CD8-positive, alpha-beta memory T cell (primary cell): ENCODE measurements at regions of chr9 and their contacts with region 1.

Region 1: GRCh38 chr9:136728080-136728547 is 14.6 kb downstream of the LCN10 start:
- DNase-seq: peak; percentile 85 to 94 (median 90)
- H3K4me3 ChIP-seq: peak overlapping the region; percentile 98
- H3K4me3 Mint-ChIP-seq: peak overlapping the region; percentile 76 to 98 (median 96)
- H3K27ac ChIP-seq: peak overlapping the region; percentile 84
- H3K27ac Mint-ChIP-seq: peak overlapping the region in 3 of 8 donors; percentile 39 to 97 (median 51)
- H3K4me1 ChIP-seq: peaks cover 28% of the 10 kb centered on the region
- H3K4me1 Mint-ChIP-seq: peaks cover 23 to 36% (median 24%) of the 10 kb centered on the region in 3 donors
- H3K27me3 ChIP-seq: no peaks in the 10 kb centered on the region
- H3K27me3 Mint-ChIP-seq: peaks cover 0 to 7% of the 10 kb centered on the region in 2 donors

Region 2: DNA sequence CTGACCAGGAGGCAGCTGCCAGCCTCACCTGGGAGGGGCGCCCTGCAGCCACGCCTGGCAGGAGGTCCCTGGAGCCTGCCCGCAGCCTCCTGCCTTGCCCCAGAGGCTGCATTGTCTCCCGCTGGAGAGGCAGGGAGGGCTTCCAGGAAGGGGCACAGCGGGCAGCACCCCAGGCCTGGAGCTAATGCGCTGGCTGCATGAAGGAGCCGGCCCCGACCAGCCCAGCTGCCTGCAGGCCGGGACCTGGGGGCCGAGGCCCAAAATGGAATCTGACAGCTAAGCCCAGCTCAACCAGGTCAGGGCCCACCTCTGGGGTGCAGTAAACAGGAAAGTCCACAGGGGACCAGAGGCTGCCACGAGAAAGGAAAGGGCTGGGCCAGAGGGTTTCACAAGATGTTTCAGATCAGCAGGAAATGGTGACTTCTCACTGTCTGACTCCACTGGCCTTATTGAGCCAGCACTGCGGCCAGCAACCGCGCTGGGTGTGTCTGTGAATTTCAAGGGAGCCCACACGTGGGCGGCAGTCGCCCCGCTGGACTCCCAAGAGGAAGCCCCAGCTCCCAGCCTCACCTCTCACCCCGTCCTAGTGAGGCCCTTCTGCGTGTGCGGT is 163.6 kb before region 1 on chr9:
- CTCF ChIA-PET with region 1: no interaction called
- POLR2A ChIA-PET with region 1: no interaction called
- DNase-seq: no peak
- H3K4me3 ChIP-seq: no peak overlapping the region
- H3K4me3 Mint-ChIP-seq: no peak overlapping the region
- H3K27ac ChIP-seq: no peak overlapping the region
- H3K27ac Mint-ChIP-seq: no peak overlapping the region
- H3K4me1 ChIP-seq: no peaks in the 10 kb centered on the region
- H3K4me1 Mint-ChIP-seq: peaks cover 0 to 1% (median 0%) of the 10 kb centered on the region in 3 donors
- H3K27me3 ChIP-seq: no peaks in the 10 kb centered on the region
- H3K27me3 Mint-ChIP-seq: no peaks in the 10 kb centered on the region

Region 3: DNA sequence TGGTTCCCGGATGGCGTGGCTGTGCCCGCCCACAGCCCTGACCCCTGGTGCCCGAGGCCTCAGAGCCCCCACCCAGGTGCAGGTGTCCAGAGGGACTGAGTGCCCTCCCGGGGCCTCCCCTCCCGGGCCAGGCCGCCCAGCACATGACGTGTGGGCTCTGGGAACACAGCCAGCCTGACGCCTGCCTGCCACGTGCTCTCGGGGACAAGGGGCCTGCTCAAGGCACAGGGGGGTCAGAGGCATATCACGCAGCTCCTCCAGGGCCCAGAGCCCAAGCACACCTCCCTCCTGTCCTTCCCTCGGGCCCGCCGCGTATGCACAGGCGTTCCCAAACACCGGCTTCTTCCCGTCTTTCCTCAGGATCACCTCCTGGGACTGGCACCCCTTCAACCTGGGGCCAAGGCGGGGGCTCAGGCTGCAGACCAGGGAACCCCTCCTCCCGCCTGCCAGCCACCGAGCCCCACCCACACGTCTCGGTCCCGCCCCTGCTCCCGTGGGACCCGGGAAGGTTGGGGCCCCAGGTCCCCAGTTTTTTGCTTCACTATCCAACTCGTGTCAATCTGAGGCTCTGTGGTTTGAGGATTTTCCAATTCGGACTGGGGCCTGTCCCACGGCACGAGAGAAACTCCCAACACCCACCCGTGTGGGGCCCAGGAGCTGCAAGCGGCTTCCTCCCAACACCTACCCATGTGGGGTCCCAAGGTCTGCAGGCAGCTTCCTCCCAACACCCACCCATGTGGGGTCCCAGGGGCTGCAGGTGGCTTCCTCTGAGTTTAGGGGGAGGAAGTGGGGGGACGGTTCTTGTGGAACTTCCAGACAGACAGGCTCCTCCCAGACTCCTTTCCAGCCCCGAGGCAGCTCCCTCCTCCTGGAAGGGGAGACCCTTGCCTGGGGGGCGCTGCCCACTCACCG is 13.1 kb after region 1 on chr9:
- CTCF ChIA-PET with region 1: interaction called, 11 read pairs
- POLR2A ChIA-PET with region 1: interaction called, 6 read pairs
- DNase-seq: no peak
- H3K4me3 ChIP-seq: peak overlapping the region; percentile 37
- H3K4me3 Mint-ChIP-seq: peak overlapping the region in 6 of 7 donors; percentile 45 to 77 (median 60)
- H3K27ac ChIP-seq: no peak overlapping the region
- H3K27ac Mint-ChIP-seq: no peak overlapping the region
- H3K4me1 ChIP-seq: peaks cover 8% of the 10 kb centered on the region
- H3K4me1 Mint-ChIP-seq: peaks cover 0 to 8% (median 0%) of the 10 kb centered on the region in 3 donors
- H3K27me3 ChIP-seq: no peaks in the 10 kb centered on the region
- H3K27me3 Mint-ChIP-seq: peaks cover 7 to 10% of the 10 kb centered on the region in 2 donors

Region 4: DNA sequence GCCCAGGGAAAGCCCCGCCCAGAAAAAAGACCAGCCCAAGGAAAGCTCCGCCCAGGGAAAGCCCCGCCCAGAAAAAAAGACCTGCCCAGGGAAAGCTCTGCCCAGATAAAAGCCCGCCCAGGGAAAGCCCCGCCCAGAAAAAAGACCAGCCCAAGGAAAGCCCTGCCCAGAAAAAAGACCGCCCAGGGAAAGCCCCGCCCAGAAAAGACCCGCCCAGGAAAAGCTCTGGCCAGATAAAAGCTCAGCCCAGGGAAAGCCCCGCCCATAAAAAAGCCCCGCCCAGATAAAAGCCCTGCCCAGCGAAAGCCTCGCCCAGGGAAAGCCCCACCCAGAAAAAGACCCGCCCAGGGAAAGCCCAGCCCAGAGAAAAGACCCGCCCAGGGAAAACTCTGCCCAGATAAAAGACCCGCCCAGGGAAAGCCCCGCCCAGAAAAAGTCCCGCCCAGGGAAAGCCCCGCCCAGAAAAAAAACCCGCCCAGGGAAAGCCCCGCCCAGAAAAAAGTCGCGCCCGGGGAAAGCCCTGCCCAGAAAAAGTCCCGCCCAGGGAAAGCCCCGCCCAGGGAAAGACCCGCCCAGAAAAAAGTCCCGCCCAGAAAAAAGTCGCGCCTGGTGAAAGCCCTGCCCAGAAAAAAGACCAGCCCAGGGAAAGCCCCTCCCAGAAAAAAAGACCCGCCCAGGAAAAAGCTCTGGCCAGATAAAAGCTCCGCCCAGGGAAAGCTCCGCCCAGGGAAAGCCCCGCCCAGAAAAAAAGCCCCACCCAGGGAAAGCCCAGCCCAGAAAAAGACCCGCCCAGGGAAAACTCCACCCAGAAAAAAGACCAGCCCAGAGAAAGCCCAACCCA is 422.7 kb after region 1 on chr9:
- CTCF ChIA-PET with region 1: no interaction called
- POLR2A ChIA-PET with region 1: no interaction called
- DNase-seq: peak in 1 of 5 donors; percentile 17
- H3K4me3 ChIP-seq: no peak overlapping the region
- H3K4me3 Mint-ChIP-seq: peak overlapping the region in 1 of 7 donors; percentile 56
- H3K27ac ChIP-seq: no peak overlapping the region
- H3K27ac Mint-ChIP-seq: peak overlapping the region in 1 of 8 donors; percentile 65
- H3K4me1 ChIP-seq: no peaks in the 10 kb centered on the region
- H3K4me1 Mint-ChIP-seq: peaks cover 0 to 1% (median 0%) of the 10 kb centered on the region in 3 donors
- H3K27me3 ChIP-seq: no peaks in the 10 kb centered on the region
- H3K27me3 Mint-ChIP-seq: peaks cover 7 to 15% of the 10 kb centered on the region in 2 donors